IMR-90 (cell line): ENCODE measurements at regions of chr1 and their contacts with region 1.

Region 1: DNA sequence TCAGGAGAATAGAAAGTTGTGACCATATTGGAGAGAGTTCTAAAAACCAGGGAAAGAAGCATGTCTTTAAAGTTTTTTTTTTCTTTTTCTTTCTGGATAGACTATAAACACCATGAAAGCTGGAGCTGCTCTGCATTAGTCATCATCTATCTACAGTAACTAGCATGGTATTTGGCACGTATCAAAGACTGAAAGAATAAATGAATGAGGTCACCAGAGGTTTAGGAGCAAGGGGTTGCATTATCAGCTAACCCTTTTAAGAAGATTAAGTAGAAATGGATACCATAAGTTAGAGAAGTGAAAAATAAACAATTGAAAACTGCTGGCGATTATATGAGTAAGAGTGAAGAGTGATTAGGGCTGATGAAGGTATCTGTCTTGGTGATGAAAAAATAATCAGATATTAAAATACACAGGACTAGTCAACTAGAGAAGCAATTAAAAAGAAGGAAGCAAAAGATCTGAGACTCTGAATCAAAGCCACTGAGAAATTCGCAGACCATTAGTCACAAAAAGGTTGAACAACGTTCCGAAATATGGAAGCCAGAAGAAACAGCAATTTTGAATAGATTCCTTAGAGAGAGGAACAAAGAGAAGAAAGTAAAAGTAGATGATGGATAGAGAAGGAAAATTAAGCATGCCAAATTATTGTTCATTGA is 536.4 kb downstream of the DPYD start:
- DNase-seq: peak; percentile 92
- ATAC-seq: peak; percentile 91
- H3K4me3 ChIP-seq: no peak overlapping the region
- H3K27ac ChIP-seq: peak overlapping the region; percentile 44; the same call in 1 of the 2 replicates
- H3K4me1 ChIP-seq: peaks cover 14% of the 10 kb centered on the region
- H3K27me3 ChIP-seq: no peaks in the 10 kb centered on the region
- CTCF ChIP-seq: no peak
- POLR2A ChIP-seq: no peak
- RAD21 ChIP-seq: no peak

Region 2: DNA sequence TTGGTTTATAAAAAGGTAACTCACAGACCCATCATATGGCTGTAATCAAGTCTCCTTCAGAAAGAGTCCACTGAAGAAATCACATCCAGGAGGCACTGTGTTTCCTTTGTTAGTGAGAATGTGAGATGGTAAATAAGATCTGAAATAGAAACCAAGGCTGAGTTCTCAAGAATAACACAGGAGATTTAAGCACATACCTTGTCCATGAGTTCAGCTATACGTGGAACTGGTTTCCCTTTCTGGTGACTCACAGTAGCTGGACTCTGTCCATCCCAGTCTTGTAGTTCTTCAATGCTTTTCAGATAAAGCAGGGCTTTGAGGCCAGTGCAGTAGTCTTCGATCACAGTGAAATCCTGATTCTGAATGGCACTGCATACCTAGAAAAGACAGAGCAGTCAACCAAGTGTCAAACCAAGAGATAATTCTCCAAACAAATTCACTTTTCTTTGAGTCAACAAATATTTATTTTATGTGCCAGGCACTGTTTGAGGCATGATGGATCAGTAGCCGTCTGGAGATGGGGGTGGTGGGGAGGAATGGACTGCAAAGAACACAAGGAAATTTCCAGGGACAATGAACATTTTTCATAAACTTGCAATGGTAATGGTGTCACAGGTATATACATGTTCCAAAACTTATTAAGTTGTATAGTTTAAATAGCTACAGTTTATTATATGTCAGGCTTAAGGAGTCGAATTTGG is 191.4 kb before region 1 on chr1:
- CTCF ChIA-PET with region 1: no interaction called
- POLR2A ChIA-PET with region 1: no interaction called
- dilution Hi-C with region 1: no loop called
- in situ Hi-C with region 1: no loop called
- intact Hi-C with region 1: loop called (anchors 10 kb)
- DNase-seq: peak; percentile 99
- ATAC-seq: peak; percentile 95
- H3K4me3 ChIP-seq: no peak overlapping the region
- H3K27ac ChIP-seq: peak overlapping the region; percentile 43; the same call in 1 of the 2 replicates
- H3K4me1 ChIP-seq: peaks cover 2% of the 10 kb centered on the region; the same call in 1 of the 2 replicates
- H3K27me3 ChIP-seq: no peaks in the 10 kb centered on the region
- CTCF ChIP-seq: peak; percentile 44
- POLR2A ChIP-seq: no peak
- RAD21 ChIP-seq: peak; percentile 47

Region 3: DNA sequence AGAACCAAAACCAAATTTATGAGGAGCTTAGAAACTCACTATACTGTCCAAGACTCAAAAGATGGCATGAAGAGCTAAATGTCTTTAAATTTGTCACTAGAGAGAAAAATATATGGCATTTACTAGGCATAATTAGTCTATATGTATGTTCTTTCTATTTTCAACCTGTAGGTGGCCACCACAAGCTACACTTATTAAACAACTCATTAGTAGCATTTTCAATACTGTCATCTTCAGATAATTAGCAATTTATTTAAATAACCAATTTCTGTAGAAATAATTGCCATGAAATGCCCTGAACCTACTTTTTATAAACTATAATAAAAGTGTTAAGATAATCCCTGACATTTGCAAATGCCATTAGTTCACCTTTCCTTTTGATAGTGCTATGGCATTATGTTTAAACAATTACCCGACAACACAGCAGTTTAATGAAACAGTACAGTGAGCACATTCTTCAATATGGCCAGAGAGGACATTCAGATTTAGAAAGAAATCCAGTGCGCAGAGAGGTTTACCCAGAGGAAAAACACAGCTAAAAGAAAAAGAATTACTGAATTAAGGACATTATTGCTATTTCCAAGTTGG is 140.4 kb before region 1 on chr1:
- CTCF ChIA-PET with region 1: no interaction called
- POLR2A ChIA-PET with region 1: no interaction called
- dilution Hi-C with region 1: no loop called
- in situ Hi-C with region 1: no loop called
- intact Hi-C with region 1: loop called (anchors 5 kb)
- DNase-seq: peak; percentile 29
- ATAC-seq: 0 out of 2 replicates have a peak, but pooled peaks have one; percentile 51
- H3K4me3 ChIP-seq: no peak overlapping the region
- H3K27ac ChIP-seq: no peak overlapping the region
- H3K4me1 ChIP-seq: no peaks in the 10 kb centered on the region
- H3K27me3 ChIP-seq: no peaks in the 10 kb centered on the region
- CTCF ChIP-seq: peak; percentile 55
- POLR2A ChIP-seq: no peak
- RAD21 ChIP-seq: peak; percentile 63

Region 4: GRCh38 chr1:97308131-97308530 is 76.3 kb before region 1 on chr1:
- CTCF ChIA-PET with region 1: no interaction called
- POLR2A ChIA-PET with region 1: no interaction called
- dilution Hi-C with region 1: no loop called
- in situ Hi-C with region 1: no loop called
- intact Hi-C with region 1: loop called (anchors 2 kb)
- DNase-seq: peak; percentile 81
- ATAC-seq: no peak; the same call in 1 of the 2 replicates
- H3K4me3 ChIP-seq: no peak overlapping the region
- H3K27ac ChIP-seq: no peak overlapping the region
- H3K4me1 ChIP-seq: no peaks in the 10 kb centered on the region; the same call in 1 of the 2 replicates
- H3K27me3 ChIP-seq: no peaks in the 10 kb centered on the region
- CTCF ChIP-seq: no peak
- POLR2A ChIP-seq: no peak
- RAD21 ChIP-seq: no peak